SK-N-SH (cell line): ENCODE measurements at regions of chr22 and their contacts with region 1.

Region 1: GRCh38 chr22:38051900-38052862 is 5.0 kb upstream of the PICK1 start:
- DNase-seq: peak; percentile 84
- H3K4me3 ChIP-seq: no peak overlapping the region; a peak in 1 of 4 replicates
- H3K27ac ChIP-seq: no peak overlapping the region
- H3K4me1 ChIP-seq: peaks cover 0 to 6% of the 10 kb centered on the region in 2 experiments; a peak in 1 of 4 replicates
- H3K27me3 ChIP-seq: no peaks in the 10 kb centered on the region; the same call in 1 of the 2 replicates
- CTCF ChIP-seq: peak; percentile 65
- EP300 ChIP-seq: no peak
- RAD21 ChIP-seq: peak; percentile 80

Region 2: GRCh38 chr22:38353142-38353629 is 301.0 kb after region 1 on chr22:
- CTCF ChIA-PET with region 1: interaction called, 19 read pairs
- POLR2A ChIA-PET with region 1: no interaction called
- DNase-seq: peak; percentile 88
- H3K4me3 ChIP-seq: no peak overlapping the region; a peak in 1 of 4 replicates
- H3K27ac ChIP-seq: no peak overlapping the region
- H3K4me1 ChIP-seq: no peaks in the 10 kb centered on the region
- H3K27me3 ChIP-seq: no peaks in the 10 kb centered on the region
- CTCF ChIP-seq: peak; percentile 75
- EP300 ChIP-seq: no peak
- RAD21 ChIP-seq: peak; percentile 72

Region 3: GRCh38 chr22:38569972-38570778 is 518.0 kb after region 1 on chr22 and contains the start of gene DMC1:
- CTCF ChIA-PET with region 1: interaction called, 27 read pairs
- POLR2A ChIA-PET with region 1: no interaction called
- DNase-seq: peak; percentile 95
- H3K4me3 ChIP-seq: peak within 1 kb of the TSS; percentile 57 to 58
- H3K27ac ChIP-seq: no peak within 1 kb of the TSS
- H3K4me1 ChIP-seq: peaks cover 0 to 2% of the 10 kb centered on the region in 2 experiments; a peak in 2 of 4 replicates
- H3K27me3 ChIP-seq: no peaks in the 10 kb centered on the region
- CTCF ChIP-seq: no peak
- EP300 ChIP-seq: no peak
- RAD21 ChIP-seq: no peak
- polyA plus RNA-seq, gene DMC1: not detected in 2 replicates